ENCODE measurements at regions of chr2 and their contacts with region 1.

Region 1: DNA sequence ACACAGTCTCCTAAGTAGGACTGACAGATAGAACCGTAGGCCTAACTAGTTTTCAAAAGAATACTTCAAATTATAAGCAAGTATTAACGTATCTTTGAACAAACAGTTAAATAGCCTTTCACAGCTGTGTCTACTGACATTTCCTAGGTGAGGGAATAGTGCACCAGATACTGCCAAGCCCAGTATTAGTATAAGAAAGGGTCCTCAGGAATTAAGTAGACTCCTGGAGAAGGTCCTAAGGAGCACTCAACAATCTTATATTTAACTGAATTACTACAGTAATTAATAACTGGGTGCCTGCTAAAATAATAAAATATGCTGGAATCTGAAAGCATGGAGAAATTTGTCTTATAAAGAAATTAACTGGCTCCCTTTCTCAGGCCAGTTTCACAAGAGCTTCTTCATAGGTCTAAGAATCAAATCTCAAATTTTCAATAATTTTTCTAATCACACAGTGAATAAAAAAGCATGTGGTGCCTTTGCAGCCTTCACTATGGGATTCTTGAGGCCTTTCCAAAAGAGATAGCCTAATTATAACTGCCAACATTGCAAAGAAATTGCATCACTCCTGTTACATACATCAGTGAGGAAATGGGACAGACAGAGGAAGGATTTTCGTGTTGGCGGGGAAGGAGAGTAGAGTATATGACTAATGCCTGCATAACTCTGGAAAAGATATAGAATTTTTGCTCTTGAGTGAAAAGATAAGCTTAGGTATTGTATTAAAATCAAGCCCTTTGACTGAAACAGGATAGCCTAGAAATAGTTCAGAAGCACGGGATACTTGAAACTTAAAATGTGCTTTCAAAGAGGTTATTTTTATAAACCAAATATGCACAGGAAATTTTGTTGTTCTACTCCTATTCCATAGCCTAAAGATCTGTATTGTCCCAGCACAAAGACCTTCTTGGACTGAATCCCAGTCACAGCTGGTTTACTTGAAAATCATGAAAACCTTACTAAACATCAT is 228.6 kb upstream of the STK17B start:
- DNase-seq: peak in 2 of 4 experiments; percentile 30 to 67
- ATAC-seq: peak; percentile 93
- H3K4me3 ChIP-seq: no peak overlapping the region
- H3K27ac ChIP-seq: peak overlapping the region; percentile 65
- H3K4me1 ChIP-seq: peaks cover 0 to 13% of the 10 kb centered on the region in 2 experiments; a peak in 2 of 5 replicates
- H3K27me3 ChIP-seq: no peaks in the 10 kb centered on the region
- CTCF ChIP-seq: no peak
- EP300 ChIP-seq: peak; percentile 99
- POLR2A ChIP-seq: no peak
- RAD21 ChIP-seq: peak in 1 of 2 experiments; percentile 21; a peak in 1 of 4 replicates

Region 2: DNA sequence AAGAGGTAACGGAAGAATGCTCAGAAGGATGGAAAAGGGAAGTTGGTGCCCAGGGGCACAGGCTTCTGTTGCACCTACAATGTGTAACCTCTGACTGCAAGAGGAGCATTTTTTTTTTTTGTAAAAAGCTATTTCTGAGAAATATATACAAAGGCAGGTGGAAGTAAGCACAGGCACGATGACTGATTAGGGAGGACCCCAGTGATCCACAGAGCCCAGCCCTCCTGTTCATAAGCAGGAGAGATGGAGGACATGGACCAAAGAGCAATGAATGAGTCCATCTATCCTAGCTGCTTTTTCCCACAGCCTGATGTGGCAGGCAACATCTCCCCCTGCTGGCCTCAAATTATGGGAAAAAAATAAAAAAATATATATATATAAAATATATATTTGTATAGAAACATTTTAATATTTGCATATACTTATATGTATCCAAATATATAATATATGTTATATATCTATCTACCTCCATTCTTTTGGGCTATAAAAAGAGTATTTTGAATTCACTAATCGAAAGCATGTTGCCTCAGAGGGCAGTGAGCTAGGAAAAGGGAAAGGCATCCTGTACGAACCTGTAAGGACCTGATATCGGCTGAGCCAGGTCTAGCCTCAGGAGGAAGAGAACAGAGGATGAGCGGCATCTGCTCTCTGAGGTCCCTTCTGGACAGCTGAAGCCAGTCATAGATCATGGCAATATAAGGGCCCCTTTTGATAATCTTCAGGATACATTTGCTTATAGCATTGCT is 62.6 kb before region 1 on chr2:
- CTCF ChIA-PET with region 1: no interaction called
- POLR2A ChIA-PET with region 1: no interaction called
- in situ Hi-C with region 1: no loop called
- intact Hi-C with region 1: loop called (anchors 5 kb)
- DNase-seq: peak; percentile 31 to 46 (median 41)
- ATAC-seq: peak; percentile 84
- H3K4me3 ChIP-seq: no peak overlapping the region
- H3K27ac ChIP-seq: no peak overlapping the region
- H3K4me1 ChIP-seq: no peaks in the 10 kb centered on the region
- H3K27me3 ChIP-seq: no peaks in the 10 kb centered on the region
- CTCF ChIP-seq: peak; percentile 31 to 52 (median 48); a peak in 3 of 6 replicates
- EP300 ChIP-seq: no peak
- POLR2A ChIP-seq: no peak
- RAD21 ChIP-seq: peak in 1 of 2 experiments; percentile 61; a peak in 2 of 4 replicates

Region 3: DNA sequence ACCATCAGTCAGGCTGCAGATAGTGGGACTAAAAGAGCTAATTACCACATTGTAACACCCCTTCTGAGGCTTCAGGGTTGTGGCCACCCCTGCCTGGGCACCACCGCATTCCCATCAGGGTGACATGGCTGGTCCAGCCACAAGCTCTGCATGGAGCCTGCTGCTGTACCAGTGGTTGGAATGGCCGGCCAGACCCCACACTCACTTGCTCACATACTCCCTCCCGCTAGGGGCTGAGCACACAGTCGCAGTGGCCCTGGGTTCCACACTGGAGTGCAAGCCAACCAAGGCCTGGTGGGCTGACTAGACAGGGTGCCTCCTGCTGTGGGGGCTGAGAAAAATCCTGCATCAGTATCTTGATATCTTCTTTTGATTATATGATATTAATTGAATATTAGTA is 45.8 kb before region 1 on chr2:
- CTCF ChIA-PET with region 1: no interaction called
- POLR2A ChIA-PET with region 1: no interaction called
- in situ Hi-C with region 1: no loop called
- intact Hi-C with region 1: no loop called
- DNase-seq: no peak
- ATAC-seq: no peak
- H3K4me3 ChIP-seq: no peak overlapping the region
- H3K27ac ChIP-seq: no peak overlapping the region
- H3K4me1 ChIP-seq: peaks cover 0 to 2% of the 10 kb centered on the region in 2 experiments; a peak in 2 of 5 replicates
- H3K27me3 ChIP-seq: no peaks in the 10 kb centered on the region
- CTCF ChIP-seq: no peak
- EP300 ChIP-seq: no peak
- POLR2A ChIP-seq: no peak
- RAD21 ChIP-seq: no peak

Region 4: DNA sequence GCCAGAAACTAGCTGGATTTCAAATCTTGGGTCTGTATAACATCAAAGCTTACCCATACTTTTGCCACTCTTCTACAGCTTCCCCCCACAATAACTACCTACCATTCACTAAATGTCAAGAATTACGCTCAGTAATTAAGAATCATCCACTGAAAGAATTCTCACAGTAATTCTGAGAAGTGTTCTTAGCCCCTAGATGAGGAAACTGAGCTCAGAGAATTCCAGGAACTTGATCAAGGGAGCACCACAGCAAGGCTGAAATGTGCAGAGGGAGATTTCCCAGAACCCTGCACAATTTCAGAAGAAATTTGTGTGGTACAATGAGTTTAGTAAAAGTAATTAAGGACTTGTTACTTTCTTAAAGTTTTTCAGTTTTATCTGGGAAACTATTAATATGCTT is 34.1 kb before region 1 on chr2:
- CTCF ChIA-PET with region 1: no interaction called
- POLR2A ChIA-PET with region 1: no interaction called
- in situ Hi-C with region 1: no loop called
- intact Hi-C with region 1: loop called (anchors 5 kb)
- DNase-seq: peak in 2 of 4 experiments; percentile 29 to 72
- ATAC-seq: peak; percentile 61
- H3K4me3 ChIP-seq: no peak overlapping the region
- H3K27ac ChIP-seq: peak overlapping the region; percentile 48; the same call in 2 of the 3 replicates
- H3K4me1 ChIP-seq: peaks cover 0 to 5% of the 10 kb centered on the region in 2 experiments; a peak in 2 of 5 replicates
- H3K27me3 ChIP-seq: no peaks in the 10 kb centered on the region
- CTCF ChIP-seq: no peak
- EP300 ChIP-seq: peak; percentile 70
- POLR2A ChIP-seq: no peak
- RAD21 ChIP-seq: no peak

Measured in K562 (cell line).